Activated CD4-positive, alpha-beta memory T cell treated with anti-CD3 and anti-CD28 coated beads for 36 hours (primary cell): ENCODE measurements at regions of chr10 and their contacts with region 1.

Region 1: GRCh38 chr10:16817125-16818019 is at the start of gene RSU1:
- DNase-seq: peak; percentile 100
- H3K4me3 Mint-ChIP-seq: peak within 1 kb of the TSS; percentile 91
- H3K27ac Mint-ChIP-seq: peak within 1 kb of the TSS; percentile 90
- H3K4me1 Mint-ChIP-seq: peaks cover 28% of the 10 kb centered on the region
- H3K27me3 Mint-ChIP-seq: peaks cover 1% of the 10 kb centered on the region
- total RNA-seq, gene RSU1: 60.6 to 61.9 TPM

Region 2: DNA sequence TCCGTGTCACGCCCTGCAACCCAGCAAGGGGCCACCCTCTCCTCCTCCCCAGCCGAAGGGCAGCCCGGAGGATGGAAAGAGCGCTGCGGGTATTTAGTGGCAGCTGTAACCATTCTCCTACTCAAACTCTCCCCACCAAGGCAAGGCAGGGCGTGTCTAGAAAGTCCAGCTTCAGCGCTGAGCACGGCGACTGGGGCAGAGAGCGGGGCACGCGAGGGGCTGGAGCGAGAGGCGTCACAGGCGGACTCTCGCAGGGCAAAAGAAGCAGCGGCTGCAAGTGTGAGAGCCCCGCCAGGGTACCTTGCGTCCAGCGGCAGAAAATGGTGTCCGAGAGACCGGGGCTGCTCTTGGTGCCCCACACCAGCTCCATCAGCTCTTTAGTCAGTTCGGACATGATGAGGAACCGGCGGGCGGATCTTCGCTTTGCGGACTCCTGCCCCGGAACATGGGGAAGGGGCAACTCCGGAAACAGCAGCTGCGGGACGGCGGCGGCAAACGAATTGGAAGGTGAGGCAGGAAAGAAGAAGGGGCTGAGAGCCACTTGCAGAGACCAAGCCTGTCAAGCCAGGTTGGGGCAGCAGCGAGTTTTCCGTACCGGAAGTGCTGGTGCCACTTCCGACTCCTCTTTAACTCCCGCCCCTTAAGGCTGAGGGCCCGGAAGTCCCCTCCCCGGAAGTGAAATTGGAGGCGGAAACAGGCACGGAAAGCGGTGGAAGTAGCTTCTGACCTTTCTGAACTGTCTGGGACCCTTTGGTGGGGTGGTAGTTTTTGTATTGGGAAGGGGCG is 957.3 kb before region 1 on chr10 and contains the start of gene MINDY3:
- CTCF ChIA-PET with region 1: no interaction called
- POLR2A ChIA-PET with region 1: no interaction called
- intact Hi-C with region 1: loop called (anchors 1 kb)
- DNase-seq: peak; percentile 88
- H3K4me3 Mint-ChIP-seq: peak within 1 kb of the TSS; percentile 99
- H3K27ac Mint-ChIP-seq: peak within 1 kb of the TSS; percentile 90
- H3K4me1 Mint-ChIP-seq: peaks cover 27% of the 10 kb centered on the region
- H3K27me3 Mint-ChIP-seq: peaks cover 13% of the 10 kb centered on the region
- total RNA-seq, gene MINDY3: 15.3 to 16.7 TPM

Region 3: GRCh38 chr10:16777473-16778370 is 39.6 kb before region 1 on chr10:
- CTCF ChIA-PET with region 1: interaction called, 5 read pairs
- POLR2A ChIA-PET with region 1: interaction called, 5 read pairs
- intact Hi-C with region 1: loop called (anchors 1 kb)
- DNase-seq: no peak
- H3K4me3 Mint-ChIP-seq: no peak overlapping the region
- H3K27ac Mint-ChIP-seq: peak overlapping the region; percentile 40
- H3K4me1 Mint-ChIP-seq: peaks cover 30% of the 10 kb centered on the region
- H3K27me3 Mint-ChIP-seq: no peaks in the 10 kb centered on the region

Region 4: DNA sequence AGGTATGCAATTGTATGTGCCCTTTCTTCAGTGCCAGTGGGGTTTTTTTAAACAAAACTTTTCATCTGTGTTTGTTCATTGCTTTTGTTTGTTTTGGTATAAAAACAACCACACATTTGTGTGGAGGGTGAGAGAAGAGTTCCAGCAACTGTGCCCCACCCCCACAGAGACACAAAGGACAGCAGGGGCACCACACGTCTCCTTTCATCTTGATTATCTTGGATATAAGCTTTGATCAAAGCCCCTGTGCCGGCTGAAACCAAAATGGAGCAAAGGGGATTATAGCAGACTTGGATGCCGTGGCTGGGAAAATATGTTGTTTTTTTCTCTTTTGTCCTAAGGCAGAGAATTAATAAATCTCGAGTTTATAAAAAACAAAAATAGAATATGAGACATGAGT is 111.7 kb after region 1 on chr10:
- CTCF ChIA-PET with region 1: no interaction called
- POLR2A ChIA-PET with region 1: no interaction called
- intact Hi-C with region 1: no loop called
- DNase-seq: no peak
- H3K4me3 Mint-ChIP-seq: no peak overlapping the region
- H3K27ac Mint-ChIP-seq: no peak overlapping the region
- H3K4me1 Mint-ChIP-seq: no peaks in the 10 kb centered on the region
- H3K27me3 Mint-ChIP-seq: no peaks in the 10 kb centered on the region

Region 5: DNA sequence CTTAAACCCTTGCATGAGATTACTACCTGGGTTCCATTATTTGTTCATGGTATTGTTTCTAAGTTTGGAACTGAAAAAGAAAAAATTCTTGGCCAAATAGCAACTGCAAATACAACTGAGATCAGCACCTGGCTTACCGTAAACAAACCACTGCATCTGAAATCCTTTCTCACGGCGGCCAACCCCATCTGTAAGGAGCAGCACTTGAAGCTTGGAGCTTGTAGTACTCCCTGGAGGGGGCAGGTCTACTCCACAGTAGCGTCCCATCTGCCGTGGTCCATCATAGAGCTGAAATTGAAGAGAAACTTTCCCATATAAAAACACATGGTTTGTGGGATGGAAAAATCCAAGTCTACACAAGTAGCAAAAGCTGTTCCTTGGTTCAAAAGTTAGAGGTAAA is 202.3 kb after region 1 on chr10:
- CTCF ChIA-PET with region 1: no interaction called
- POLR2A ChIA-PET with region 1: no interaction called
- intact Hi-C with region 1: no loop called
- DNase-seq: no peak
- H3K4me3 Mint-ChIP-seq: no peak overlapping the region
- H3K27ac Mint-ChIP-seq: no peak overlapping the region
- H3K4me1 Mint-ChIP-seq: peaks cover 23% of the 10 kb centered on the region
- H3K27me3 Mint-ChIP-seq: peaks cover 4% of the 10 kb centered on the region

Region 6: GRCh38 chr10:17029581-17030271 is 212.4 kb after region 1 on chr10:
- CTCF ChIA-PET with region 1: no interaction called
- POLR2A ChIA-PET with region 1: no interaction called
- intact Hi-C with region 1: loop called (anchors 5 kb)
- DNase-seq: peak; percentile 93
- H3K4me3 Mint-ChIP-seq: peak overlapping the region; percentile 69
- H3K27ac Mint-ChIP-seq: peak overlapping the region; percentile 85
- H3K4me1 Mint-ChIP-seq: peaks cover 69% of the 10 kb centered on the region
- H3K27me3 Mint-ChIP-seq: no peaks in the 10 kb centered on the region

Region 7: DNA sequence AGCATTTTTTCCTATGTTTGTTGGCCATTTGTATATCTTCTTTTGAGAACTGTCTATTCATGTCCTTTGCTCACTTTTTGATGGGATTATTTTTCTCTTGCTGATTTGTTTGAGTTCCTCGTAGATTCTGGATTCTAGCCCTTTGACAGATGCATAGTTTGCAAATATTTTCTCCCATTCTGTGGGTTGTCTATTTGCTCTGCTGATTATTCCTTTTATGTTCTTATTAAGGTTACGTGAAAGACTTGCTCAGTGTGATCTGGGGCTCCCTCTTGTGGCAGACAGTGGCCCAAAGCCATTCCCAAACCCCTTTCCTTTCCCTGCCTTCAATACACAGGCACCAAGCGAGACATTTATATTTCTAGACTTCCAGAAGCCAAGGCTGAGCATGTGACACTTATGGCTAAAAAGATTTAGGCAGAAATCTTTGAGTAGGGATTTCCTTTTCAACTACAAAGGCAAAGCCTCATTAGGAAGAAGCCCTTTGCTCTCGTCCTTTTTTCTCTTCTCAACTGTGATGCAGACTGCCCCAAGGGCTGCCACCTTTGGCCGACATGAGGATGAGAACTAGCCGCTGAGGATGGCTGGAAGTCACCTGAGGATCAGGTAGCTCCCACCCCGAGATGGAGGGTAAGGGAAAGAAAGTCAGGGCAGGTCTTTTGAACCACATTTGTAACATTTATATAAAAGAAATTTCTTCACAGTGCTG is 613.4 kb after region 1 on chr10:
- CTCF ChIA-PET with region 1: no interaction called
- POLR2A ChIA-PET with region 1: no interaction called
- intact Hi-C with region 1: loop called (anchors 5 kb)
- DNase-seq: peak; percentile 70
- H3K4me3 Mint-ChIP-seq: no peak overlapping the region
- H3K27ac Mint-ChIP-seq: no peak overlapping the region
- H3K4me1 Mint-ChIP-seq: peaks cover 52% of the 10 kb centered on the region
- H3K27me3 Mint-ChIP-seq: no peaks in the 10 kb centered on the region